Activated naive CD8-positive, alpha-beta T cell treated with anti-CD3 and anti-CD28 coated beads, Interleukin-2, amount 10 ng/mL, durations not matched to agents 7 days and 5 days (primary cell): ENCODE measurements at regions of chr16 and their contacts with region 1.

Region 1: GRCh38 chr16:89815639-89816348 is 653 bp downstream of the FANCA start:
- DNase-seq: no peak
- ATAC-seq: peak; percentile 27
- H3K4me3 Mint-ChIP-seq: peak overlapping the region; percentile 88
- H3K27ac Mint-ChIP-seq: peak overlapping the region; percentile 45
- H3K4me1 Mint-ChIP-seq: peaks cover 22% of the 10 kb centered on the region
- H3K27me3 Mint-ChIP-seq: no peaks in the 10 kb centered on the region

Region 2: DNA sequence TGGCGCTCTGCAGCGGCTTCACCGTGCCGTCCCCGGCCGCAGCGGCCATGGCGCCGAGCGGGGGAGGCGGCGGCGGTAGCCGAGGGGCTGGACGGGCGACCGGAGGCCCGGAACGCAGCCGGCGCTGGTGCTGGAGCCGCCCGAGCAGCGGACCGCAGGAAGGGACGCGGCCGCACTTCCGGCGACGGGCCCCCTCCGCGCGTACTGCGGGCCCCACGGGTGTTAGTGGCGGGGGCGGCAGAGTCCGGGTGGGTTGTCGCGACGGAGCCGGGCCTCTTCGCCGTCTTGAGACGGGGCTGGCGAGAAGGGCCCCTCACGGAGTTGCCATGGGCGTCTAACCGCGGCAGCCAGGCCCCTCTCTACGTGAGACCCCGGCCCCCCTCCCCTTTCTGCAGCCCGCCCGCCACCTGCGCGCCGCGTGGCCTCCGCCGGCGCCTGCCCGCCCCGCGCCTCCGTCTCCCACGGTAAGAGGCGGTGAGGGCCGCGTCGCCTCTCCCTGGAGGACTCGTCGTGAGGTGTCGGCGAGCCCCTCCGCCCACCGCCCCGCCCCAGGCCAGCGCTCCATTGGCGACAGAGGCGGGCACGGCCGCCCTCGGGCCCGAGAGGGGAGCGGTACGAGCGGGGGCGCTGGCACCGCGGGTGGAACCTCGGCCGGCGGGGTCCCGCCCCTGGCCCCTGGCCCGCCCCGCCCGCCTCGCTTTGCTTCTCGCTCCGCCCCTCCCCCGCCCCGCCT is 94.8 kb before region 1 on chr16 and contains the starts of genes VPS9D1 and ZNF276:
- POLR2A ChIA-PET with region 1: no interaction called
- DNase-seq: peak; percentile 90
- ATAC-seq: peak; percentile 37
- H3K4me3 Mint-ChIP-seq: peak within 1 kb of the TSS; percentile 99
- H3K27ac Mint-ChIP-seq: peak within 1 kb of the TSS; percentile 97
- H3K4me1 Mint-ChIP-seq: peaks cover 32% of the 10 kb centered on the region
- H3K27me3 Mint-ChIP-seq: no peaks in the 10 kb centered on the region
- total RNA-seq, gene VPS9D1: 10.3 to 12.8 TPM
- total RNA-seq, gene ZNF276: 98.0 to 107 TPM

Region 3: GRCh38 chr16:89805136-89805905 is 10.5 kb before region 1 on chr16:
- POLR2A ChIA-PET with region 1: interaction called, 11 read pairs
- DNase-seq: no peak
- ATAC-seq: no peak
- H3K4me3 Mint-ChIP-seq: no peak overlapping the region
- H3K27ac Mint-ChIP-seq: no peak overlapping the region
- H3K4me1 Mint-ChIP-seq: no peaks in the 10 kb centered on the region
- H3K27me3 Mint-ChIP-seq: no peaks in the 10 kb centered on the region

Region 4: DNA sequence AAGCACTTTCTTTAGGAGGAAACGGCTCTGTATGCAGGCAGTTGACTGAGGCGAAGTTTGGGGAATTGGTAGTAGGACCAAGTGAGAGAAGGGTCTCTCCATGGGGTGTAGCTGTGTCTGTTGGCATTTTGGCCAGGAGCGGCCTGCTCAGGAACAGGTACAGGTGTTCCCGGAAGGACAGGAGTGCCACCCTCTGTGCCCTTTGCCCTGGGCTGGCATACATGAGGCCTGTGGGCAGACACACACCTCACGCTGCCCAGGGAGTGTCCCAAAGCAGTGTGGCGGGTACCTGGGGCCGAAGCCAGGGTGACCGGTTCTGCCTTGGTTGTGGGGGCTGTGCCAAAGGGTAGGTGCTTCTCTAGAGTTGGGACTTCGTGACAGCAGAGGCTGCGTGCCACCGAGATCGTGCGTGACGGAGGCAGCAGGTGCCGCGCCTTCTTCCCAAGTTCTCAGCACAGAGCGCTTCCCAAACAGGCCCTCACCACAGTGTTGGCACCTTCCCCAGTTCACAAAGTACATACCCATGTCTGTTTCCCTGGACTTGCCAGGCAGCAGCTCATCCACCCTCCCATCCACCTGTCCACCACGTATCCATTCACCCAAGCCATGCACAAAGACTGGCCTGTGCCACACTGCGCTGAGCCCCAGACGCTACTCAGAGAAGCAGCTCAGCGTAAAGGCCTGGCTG is 37.7 kb after region 1 on chr16:
- POLR2A ChIA-PET with region 1: no interaction called
- DNase-seq: no peak
- ATAC-seq: no peak
- H3K4me3 Mint-ChIP-seq: no peak overlapping the region
- H3K27ac Mint-ChIP-seq: no peak overlapping the region
- H3K4me1 Mint-ChIP-seq: no peaks in the 10 kb centered on the region
- H3K27me3 Mint-ChIP-seq: peaks cover 5% of the 10 kb centered on the region